ENCODE measurements at regions of chr15 and their contacts with region 1.

Region 1: GRCh38 chr15:90954712-90955671 is at the start of gene RCCD1:
- DNase-seq: peak; percentile 90 to 98 (median 97)
- H3K4me3 ChIP-seq: peak within 1 kb of the TSS; percentile 59 to 99 (median 89)
- H3K27ac ChIP-seq: peak within 1 kb of the TSS in 52 of 59 donors; percentile 7 to 92 (median 69)
- H3K27me3 ChIP-seq: no peaks in the 10 kb centered on the region
- CTCF ChIP-seq: peak in 24 of 56 donors; percentile 6 to 54 (median 18)
- total RNA-seq, gene RCCD1: 10.6 to 28.2 (median 18.0) TPM

Region 2: GRCh38 chr15:90994417-90995311 is 39.7 kb after region 1 on chr15 and contains the start of gene PRC1:
- intact Hi-C with region 1: loop called in 1 of 2 experiments (anchors 2 kb)
- DNase-seq: peak; percentile 93 to 99 (median 98)
- H3K4me3 ChIP-seq: peak within 1 kb of the TSS; percentile 68 to 99 (median 90)
- H3K27ac ChIP-seq: peak within 1 kb of the TSS in 57 of 59 donors; percentile 18 to 95 (median 82)
- H3K27me3 ChIP-seq: no peaks in the 10 kb centered on the region
- CTCF ChIP-seq: peak in 23 of 56 donors; percentile 4 to 47 (median 20)
- total RNA-seq, gene PRC1: 6.7 to 23.2 (median 13.5) TPM

Region 3: GRCh38 chr15:91022075-91022835 is 67.3 kb after region 1 on chr15 and contains the start of gene VPS33B:
- intact Hi-C with region 1: loop called in 1 of 2 experiments (anchors 10 kb)
- DNase-seq: peak; percentile 70 to 90 (median 87)
- H3K4me3 ChIP-seq: peak within 1 kb of the TSS; percentile 74 to 99 (median 94)
- H3K27ac ChIP-seq: peak within 1 kb of the TSS in 57 of 59 donors; percentile 5 to 92 (median 83)
- H3K27me3 ChIP-seq: no peaks in the 10 kb centered on the region
- CTCF ChIP-seq: peak in 40 of 56 donors; percentile 8 to 55 (median 32)
- total RNA-seq, gene VPS33B: 12.8 to 34.6 (median 22.3) TPM

Region 4: DNA sequence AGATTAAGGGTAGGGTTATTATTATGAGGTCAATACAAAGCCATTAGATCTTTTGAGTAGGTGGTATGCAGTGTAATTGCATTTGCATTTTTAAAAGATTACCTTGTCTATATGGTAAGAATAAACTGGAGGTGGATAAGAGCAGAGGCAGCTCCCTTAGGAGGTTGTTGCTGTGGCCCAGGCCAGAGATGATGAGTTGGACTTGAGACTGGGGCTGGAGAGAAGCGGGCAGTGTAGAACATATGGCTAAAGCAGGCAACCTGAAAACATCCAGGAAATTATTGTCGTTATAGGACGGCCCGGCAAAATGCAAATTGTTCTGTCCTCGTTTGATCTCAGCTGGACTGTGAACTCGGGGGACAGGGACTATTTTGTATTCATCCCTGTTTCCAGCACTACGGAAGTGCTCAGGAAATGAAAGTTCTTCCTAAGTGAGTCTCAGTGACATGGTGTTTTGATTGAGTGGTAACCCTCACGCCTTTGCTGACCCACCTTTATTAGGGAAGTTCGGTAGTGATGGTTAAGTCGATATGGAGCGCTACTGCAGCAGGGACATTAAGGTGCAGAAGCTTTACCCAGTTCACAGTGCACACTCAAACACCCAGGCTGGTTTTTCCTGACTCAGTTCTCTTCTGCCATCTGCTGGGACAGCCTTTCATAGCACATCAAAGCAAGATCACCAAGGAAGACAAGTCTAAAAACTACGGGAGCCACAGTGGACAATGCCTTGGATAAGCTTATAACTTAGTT is 94.6 kb after region 1 on chr15:
- intact Hi-C with region 1: loop called (anchors 2 kb)
- DNase-seq: peak in 8 of 10 donors; percentile 52 to 86 (median 60)
- H3K4me3 ChIP-seq: peak overlapping the region in 34 of 59 donors; percentile 4 to 55 (median 34)
- H3K27ac ChIP-seq: no peak overlapping the region
- H3K27me3 ChIP-seq: no peaks in the 10 kb centered on the region
- CTCF ChIP-seq: peak; percentile 38 to 83 (median 69)

Region 5: DNA sequence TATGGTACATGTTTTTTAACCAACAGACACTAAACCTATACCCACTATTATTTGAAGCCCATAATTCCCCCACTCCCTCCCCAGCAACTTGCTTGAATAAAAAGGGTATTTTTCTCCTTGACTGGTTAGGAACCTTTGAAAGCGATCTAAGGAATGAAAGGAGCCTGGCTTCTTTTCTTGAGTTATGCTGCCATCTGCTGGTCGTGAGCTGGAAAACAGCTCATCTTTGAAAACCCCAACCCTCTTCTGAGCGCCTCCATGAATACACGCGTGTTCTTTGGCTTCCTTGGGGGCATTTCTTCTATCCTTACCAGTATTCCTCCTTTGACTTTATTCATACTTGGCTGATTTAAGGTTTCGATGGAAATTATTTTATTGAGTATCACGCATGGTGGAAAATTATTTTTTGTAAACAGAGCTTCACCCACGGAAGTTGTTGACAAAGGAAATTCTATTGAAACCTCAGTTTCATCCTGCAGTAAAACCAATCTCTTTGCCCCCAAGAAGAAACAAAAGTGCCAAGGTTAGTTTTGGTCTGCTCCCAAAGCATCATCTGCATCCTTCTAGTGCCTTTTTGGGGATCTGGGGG is 316.7 kb after region 1 on chr15:
- intact Hi-C with region 1: loop called (anchors 2 to 5 kb)
- DNase-seq: peak in 9 of 10 donors; percentile 18 to 69 (median 63)
- H3K4me3 ChIP-seq: no peak overlapping the region
- H3K27ac ChIP-seq: peak overlapping the region in 6 of 59 donors; percentile 1 to 20 (median 18)
- H3K27me3 ChIP-seq: no peaks in the 10 kb centered on the region
- CTCF ChIP-seq: peak; percentile 82 to 98 (median 91)